Left ventricle myocardium superior (tissue), 1 donor: ENCODE measurements at regions of chr2 and their contacts with region 1.

Region 1: DNA sequence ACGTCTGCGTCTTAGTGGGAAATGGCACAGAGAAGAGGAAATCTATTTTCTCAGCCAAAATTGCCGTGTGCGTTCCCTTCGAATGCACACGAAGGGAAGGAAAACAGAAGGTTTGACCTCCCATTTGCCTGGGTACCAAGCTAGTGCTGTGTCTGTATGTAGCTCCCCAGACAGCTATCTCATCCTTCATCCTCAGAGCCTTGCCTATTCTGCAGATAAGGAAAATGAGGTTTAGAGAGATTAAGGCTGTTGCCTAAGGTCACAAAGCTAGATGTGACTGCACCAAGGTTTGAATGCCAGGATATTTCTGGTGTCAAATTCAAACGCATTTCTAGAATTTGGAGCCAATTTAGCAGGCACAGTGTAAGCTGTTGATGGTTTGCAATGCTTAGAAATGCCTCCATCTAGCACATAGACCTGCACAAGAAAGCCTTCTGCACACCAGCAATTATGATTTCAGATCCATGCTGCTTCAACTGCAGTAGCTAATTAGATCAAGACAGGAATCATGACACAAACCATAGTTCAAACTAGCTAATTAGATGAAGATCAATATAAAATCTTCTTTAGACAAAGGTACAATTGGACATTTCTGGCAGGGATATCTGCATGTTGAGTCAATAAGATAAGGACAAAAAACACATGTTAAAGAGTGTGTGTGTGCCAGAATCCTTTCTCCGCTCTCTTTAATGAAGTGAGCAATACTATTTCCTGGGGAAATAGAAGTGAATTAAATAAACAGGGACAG is 115.1 kb downstream of the CMPK2 start:
- DNase-seq: no peak
- ATAC-seq: no peak

Region 2: DNA sequence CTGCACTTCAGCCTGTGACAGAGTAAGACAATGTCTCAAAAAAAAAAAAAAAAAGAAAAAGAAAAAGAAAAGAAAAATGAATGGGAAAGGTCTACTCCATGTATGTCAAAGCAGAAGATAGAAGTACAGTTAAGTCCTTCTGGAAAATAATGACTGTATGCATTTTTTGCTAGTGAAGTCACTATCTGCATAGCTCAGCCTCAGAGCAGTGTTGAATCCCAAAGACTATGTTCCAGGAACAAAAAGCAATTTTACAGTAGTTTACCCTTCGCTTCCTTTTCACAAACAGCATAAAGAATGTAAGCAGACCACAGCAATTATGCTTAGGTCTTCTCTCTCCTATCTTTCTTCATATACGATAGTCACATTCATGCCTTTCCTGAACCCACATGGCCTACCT is 382.3 kb before region 1 on chr2:
- intact Hi-C with region 1: loop called (anchors 10 kb)
- DNase-seq: no peak
- ATAC-seq: no peak